Endothelial cell of umbilical vein (primary cell): ENCODE measurements at regions of chr2 and their contacts with region 1.

Region 1: DNA sequence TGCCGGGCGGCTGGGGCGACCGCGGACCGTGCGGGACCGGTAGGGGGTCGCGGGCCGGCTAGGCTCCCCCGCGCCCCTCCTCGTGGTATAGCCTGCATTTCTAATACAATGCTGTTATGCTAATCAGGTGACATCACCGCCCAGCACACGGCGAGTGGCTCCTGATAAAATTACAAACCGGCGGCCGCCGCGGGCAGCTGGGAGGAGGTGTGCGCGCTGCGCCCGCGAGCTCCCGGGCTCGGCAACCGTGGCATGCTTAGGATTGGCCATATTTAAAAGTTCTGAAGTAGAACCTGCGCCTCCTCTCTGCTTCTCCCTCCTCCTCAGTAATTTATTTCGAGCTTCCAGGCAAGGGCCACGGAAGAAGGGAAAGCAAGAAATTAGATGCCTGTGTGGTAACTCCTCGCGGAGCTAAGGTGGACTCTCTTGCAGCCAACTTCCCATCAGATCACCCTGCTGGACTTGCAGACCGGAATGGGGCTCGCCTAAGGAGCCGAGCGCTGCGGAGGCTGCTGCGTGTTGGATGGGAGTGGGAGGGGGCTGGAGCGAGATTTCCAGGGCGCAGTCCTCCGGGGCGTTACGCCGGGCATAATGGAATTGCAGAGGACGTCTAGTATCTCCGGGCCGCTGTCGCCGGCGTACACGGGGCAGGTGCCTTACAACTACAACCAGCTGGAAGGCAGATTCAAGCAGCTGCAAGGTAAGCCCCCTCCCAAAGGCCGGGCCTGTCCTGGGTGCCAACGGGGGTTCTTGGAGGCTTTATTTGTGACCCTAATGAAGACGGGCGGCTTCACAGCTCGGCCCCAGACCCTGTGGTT is 102.3 kb downstream of the SPTBN1 start:
- DNase-seq: peak; percentile 86
- H3K4me3 ChIP-seq: peak overlapping the region; percentile 50 to 99 (median 99)
- H3K27ac ChIP-seq: peak overlapping the region; percentile 99
- H3K4me1 ChIP-seq: peaks cover 42% of the 10 kb centered on the region
- H3K27me3 ChIP-seq: no peaks in the 10 kb centered on the region
- CTCF ChIP-seq: no peak
- POLR2A ChIP-seq: peak; percentile 53

Region 2: DNA sequence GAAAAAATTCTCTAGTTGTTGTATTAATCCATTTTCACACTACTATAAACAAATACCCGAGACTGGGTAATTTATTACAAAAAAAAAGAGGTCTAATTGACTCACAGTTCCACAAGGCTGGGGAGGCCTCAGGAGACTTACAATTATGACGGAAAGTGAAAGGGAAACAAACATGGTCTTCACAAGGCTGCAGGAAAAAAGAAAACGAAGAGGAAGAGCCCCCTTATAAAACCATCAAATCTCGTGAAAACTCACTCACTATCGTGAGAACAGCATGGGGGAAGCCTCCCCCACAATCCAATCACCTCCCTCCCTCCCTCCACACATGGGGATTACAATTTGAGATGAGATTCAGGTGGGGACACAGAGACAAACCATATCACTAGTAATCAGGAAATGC is 164.0 kb before region 1 on chr2:
- CTCF ChIA-PET with region 1: no interaction called
- POLR2A ChIA-PET with region 1: no interaction called
- dilution Hi-C with region 1: no loop called
- intact Hi-C with region 1: no loop called
- DNase-seq: no peak
- H3K4me3 ChIP-seq: no peak overlapping the region
- H3K27ac ChIP-seq: no peak overlapping the region
- H3K4me1 ChIP-seq: no peaks in the 10 kb centered on the region
- H3K27me3 ChIP-seq: no peaks in the 10 kb centered on the region
- CTCF ChIP-seq: no peak
- POLR2A ChIP-seq: no peak

Region 3: GRCh38 chr2:54510916-54511315 is 47.5 kb before region 1 on chr2:
- CTCF ChIA-PET with region 1: no interaction called
- POLR2A ChIA-PET with region 1: no interaction called
- dilution Hi-C with region 1: no loop called
- intact Hi-C with region 1: no loop called
- DNase-seq: no peak
- H3K4me3 ChIP-seq: no peak overlapping the region
- H3K27ac ChIP-seq: no peak overlapping the region
- H3K4me1 ChIP-seq: no peaks in the 10 kb centered on the region
- H3K27me3 ChIP-seq: no peaks in the 10 kb centered on the region
- CTCF ChIP-seq: no peak
- POLR2A ChIP-seq: no peak

Region 4: GRCh38 chr2:54522624-54523281 is 35.6 kb before region 1 on chr2:
- CTCF ChIA-PET with region 1: interaction called, 30 read pairs
- POLR2A ChIA-PET with region 1: interaction called, 3 read pairs
- dilution Hi-C with region 1: no loop called
- intact Hi-C with region 1: loop called (anchors 2 kb)
- DNase-seq: peak; percentile 44
- H3K4me3 ChIP-seq: no peak overlapping the region
- H3K27ac ChIP-seq: no peak overlapping the region
- H3K4me1 ChIP-seq: peaks cover 10% of the 10 kb centered on the region
- H3K27me3 ChIP-seq: no peaks in the 10 kb centered on the region
- CTCF ChIP-seq: peak; percentile 48 to 68
- POLR2A ChIP-seq: no peak

Region 5: GRCh38 chr2:54570925-54571694 is 12.7 kb after region 1 on chr2:
- CTCF ChIA-PET with region 1: interaction called, 22 read pairs
- POLR2A ChIA-PET with region 1: interaction called, 52 read pairs
- dilution Hi-C with region 1: no loop called
- intact Hi-C with region 1: loop called (anchors 1 kb)
- DNase-seq: peak; percentile 84
- H3K4me3 ChIP-seq: no peak overlapping the region
- H3K27ac ChIP-seq: peak overlapping the region; percentile 100
- H3K4me1 ChIP-seq: peaks cover 66% of the 10 kb centered on the region
- H3K27me3 ChIP-seq: no peaks in the 10 kb centered on the region
- CTCF ChIP-seq: no peak
- POLR2A ChIP-seq: no peak

Region 6: DNA sequence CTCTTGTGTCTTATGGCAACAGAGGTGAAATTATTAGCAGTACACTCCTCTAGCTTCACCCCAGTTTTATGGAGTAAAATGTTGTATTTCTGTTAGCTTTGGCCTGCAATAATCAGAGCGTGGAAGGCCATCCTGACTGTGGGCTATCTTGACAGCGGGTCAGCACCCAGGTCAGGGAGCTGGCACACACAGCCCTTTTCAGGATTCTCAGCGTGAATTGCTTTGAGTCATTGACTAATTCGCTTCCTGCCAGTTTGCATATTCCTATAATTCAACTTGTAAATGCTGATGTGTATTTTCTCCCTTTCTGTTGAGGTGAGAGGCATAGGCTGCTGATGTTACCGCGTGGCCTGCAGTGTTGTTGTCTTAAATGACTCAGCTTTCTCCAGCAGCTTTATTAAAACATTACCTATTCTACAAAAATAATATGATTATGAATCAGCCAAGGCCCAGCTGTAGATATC is 55.4 kb after region 1 on chr2:
- CTCF ChIA-PET with region 1: interaction called, 23 read pairs
- POLR2A ChIA-PET with region 1: interaction called, 4 read pairs
- dilution Hi-C with region 1: no loop called
- intact Hi-C with region 1: loop called (anchors 1 kb)
- DNase-seq: peak; percentile 94
- H3K4me3 ChIP-seq: no peak overlapping the region
- H3K27ac ChIP-seq: peak overlapping the region; percentile 93
- H3K4me1 ChIP-seq: peaks cover 38% of the 10 kb centered on the region
- H3K27me3 ChIP-seq: no peaks in the 10 kb centered on the region
- CTCF ChIP-seq: no peak
- POLR2A ChIP-seq: no peak

Region 7: GRCh38 chr2:54665436-54665856 is 107.0 kb after region 1 on chr2:
- CTCF ChIA-PET with region 1: interaction called, 18 read pairs
- POLR2A ChIA-PET with region 1: no interaction called
- dilution Hi-C with region 1: no loop called
- intact Hi-C with region 1: no loop called
- DNase-seq: peak; percentile 76
- H3K4me3 ChIP-seq: no peak overlapping the region
- H3K27ac ChIP-seq: no peak overlapping the region
- H3K4me1 ChIP-seq: peaks cover 16% of the 10 kb centered on the region
- H3K27me3 ChIP-seq: no peaks in the 10 kb centered on the region
- CTCF ChIP-seq: peak; percentile 74
- POLR2A ChIP-seq: no peak

Region 8: DNA sequence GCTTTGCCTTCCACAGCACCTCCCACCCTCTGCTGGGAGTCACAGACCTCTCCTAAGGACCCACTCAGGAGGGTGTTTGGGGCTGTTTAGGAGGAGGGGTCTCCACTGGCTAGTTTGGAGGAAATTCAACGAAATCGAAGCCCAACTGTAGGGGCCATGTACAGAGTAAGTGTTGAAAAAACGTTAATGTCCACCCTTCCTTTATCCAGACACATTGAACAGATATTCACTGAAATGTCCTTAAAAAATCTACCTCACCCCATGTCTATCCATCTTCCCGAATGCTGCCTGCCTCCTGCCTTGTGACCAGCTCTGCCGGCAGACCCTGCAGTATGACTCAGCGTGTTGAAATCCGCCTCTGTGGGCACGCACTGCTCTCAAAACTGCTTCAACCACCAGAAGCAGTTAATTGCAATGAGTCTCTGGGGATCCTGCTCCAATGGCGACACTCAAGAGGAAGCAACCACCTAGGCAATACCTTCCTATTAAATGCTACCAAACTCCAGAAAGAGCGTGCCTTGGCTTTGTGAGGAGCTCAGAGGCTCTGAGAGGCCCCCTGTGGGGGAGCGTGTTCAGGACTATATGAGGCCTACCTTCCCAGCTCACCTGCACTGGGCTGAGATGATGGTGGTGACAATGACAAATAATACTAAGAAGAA is 553.3 kb after region 1 on chr2:
- CTCF ChIA-PET with region 1: no interaction called
- POLR2A ChIA-PET with region 1: no interaction called
- dilution Hi-C with region 1: no loop called
- intact Hi-C with region 1: no loop called
- DNase-seq: peak; percentile 49
- H3K4me3 ChIP-seq: no peak overlapping the region
- H3K27ac ChIP-seq: peak overlapping the region; percentile 44
- H3K4me1 ChIP-seq: peaks cover 48% of the 10 kb centered on the region
- H3K27me3 ChIP-seq: no peaks in the 10 kb centered on the region
- CTCF ChIP-seq: no peak
- POLR2A ChIP-seq: no peak